Activated CD4-positive, alpha-beta T cell treated with anti-CD3 and anti-CD28 coated beads for 36 hours (primary cell): ENCODE measurements at regions of chr4 and their contacts with region 1.

Region 1: GRCh38 chr4:114386637-114387233 is 211.9 kb upstream of the UGT8 start:
- DNase-seq: no peak
- ATAC-seq: no peak
- H3K4me3 Mint-ChIP-seq: no peak overlapping the region
- H3K27ac Mint-ChIP-seq: no peak overlapping the region
- H3K4me1 Mint-ChIP-seq: no peaks in the 10 kb centered on the region
- H3K27me3 Mint-ChIP-seq: peaks cover 9% of the 10 kb centered on the region

Region 2: DNA sequence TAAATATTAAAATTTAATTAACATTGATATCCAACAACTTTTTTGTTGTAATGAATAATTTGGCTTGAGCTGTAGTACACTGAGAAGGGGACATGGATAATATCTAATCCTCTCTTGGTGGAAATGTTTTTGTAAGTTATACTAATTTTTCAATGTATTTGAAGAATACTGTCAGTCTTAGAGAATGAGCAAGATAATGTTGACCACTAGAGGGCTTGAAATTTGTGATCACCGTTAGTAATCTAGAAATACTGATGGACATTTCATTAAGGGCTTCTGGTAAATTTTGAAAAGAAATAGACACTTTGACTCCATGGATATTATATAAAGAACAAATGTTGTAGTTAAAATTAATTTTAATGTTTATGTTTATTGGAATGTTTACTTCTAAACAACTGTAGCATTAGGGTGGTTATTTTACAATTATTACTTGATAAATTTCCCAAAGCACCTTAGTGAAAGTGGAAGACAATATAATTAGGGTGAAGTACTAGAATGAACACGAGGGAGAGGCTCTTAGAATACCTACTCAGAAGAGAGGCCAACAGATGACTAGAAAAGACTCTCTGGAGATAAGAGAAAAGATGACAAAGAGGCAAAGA is 605.2 kb before region 1 on chr4:
- CTCF ChIA-PET with region 1: no interaction called
- POLR2A ChIA-PET with region 1: no interaction called
- intact Hi-C with region 1: loop called in 1 of 2 experiments (anchors 10 kb)
- DNase-seq: no peak
- ATAC-seq: no peak
- H3K4me3 Mint-ChIP-seq: no peak overlapping the region
- H3K27ac Mint-ChIP-seq: no peak overlapping the region
- H3K4me1 Mint-ChIP-seq: peaks cover 31% of the 10 kb centered on the region
- H3K27me3 Mint-ChIP-seq: no peaks in the 10 kb centered on the region

Region 3: DNA sequence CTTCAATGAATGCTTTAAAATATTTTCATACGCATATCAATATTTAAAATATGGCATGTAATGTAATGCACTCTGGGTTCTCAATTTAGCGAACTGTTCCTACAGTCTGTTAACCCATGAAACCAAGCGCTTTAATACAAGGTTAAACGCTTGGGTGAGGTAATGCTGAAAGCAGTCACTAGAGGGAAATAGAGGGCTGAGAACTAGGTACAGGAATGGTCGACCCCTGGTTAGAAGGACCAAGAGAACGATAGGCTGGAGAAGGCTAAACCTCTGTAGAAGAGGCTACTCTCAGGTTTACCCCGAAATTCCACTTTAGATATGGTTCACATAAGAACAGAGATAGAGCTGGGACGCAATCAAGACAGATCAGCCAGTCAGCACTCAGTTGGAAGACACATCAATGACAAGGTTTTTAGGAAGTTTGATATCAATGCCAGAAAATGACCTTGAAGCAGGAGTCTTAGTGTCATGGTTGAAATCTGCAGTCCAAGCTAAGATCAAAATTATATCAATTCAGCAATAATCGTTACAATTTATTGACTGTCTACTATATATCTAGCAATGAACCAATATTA is 434.2 kb before region 1 on chr4:
- CTCF ChIA-PET with region 1: no interaction called
- POLR2A ChIA-PET with region 1: no interaction called
- intact Hi-C with region 1: loop called (anchors 2 to 10 kb)
- DNase-seq: peak; percentile 30
- ATAC-seq: peak; percentile 83
- H3K4me3 Mint-ChIP-seq: no peak overlapping the region
- H3K27ac Mint-ChIP-seq: no peak overlapping the region
- H3K4me1 Mint-ChIP-seq: peaks cover 4% of the 10 kb centered on the region
- H3K27me3 Mint-ChIP-seq: peaks cover 8% of the 10 kb centered on the region

Region 4: DNA sequence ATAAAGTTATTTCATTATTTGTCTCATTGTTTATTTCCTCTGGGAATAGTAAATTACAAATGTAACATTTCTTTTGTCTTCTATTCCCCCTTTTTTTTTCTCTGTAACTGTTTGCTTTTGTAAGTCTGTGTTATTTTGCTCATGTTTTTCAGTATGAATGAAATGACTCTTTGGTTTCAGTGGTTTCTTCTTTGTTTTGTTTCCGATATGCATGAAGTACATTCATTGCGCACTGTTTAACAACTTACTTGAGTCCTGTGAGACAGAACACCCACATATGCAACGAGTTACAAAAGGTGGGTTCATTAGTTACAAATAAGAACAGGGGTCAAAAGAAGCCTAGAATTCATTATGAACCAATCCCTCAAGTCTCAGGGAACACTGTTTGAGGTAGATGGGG is 36.8 kb after region 1 on chr4:
- CTCF ChIA-PET with region 1: no interaction called
- POLR2A ChIA-PET with region 1: no interaction called
- intact Hi-C with region 1: no loop called
- DNase-seq: no peak
- ATAC-seq: peak; percentile 39
- H3K4me3 Mint-ChIP-seq: no peak overlapping the region
- H3K27ac Mint-ChIP-seq: no peak overlapping the region
- H3K4me1 Mint-ChIP-seq: no peaks in the 10 kb centered on the region
- H3K27me3 Mint-ChIP-seq: peaks cover 3% of the 10 kb centered on the region

Region 5: DNA sequence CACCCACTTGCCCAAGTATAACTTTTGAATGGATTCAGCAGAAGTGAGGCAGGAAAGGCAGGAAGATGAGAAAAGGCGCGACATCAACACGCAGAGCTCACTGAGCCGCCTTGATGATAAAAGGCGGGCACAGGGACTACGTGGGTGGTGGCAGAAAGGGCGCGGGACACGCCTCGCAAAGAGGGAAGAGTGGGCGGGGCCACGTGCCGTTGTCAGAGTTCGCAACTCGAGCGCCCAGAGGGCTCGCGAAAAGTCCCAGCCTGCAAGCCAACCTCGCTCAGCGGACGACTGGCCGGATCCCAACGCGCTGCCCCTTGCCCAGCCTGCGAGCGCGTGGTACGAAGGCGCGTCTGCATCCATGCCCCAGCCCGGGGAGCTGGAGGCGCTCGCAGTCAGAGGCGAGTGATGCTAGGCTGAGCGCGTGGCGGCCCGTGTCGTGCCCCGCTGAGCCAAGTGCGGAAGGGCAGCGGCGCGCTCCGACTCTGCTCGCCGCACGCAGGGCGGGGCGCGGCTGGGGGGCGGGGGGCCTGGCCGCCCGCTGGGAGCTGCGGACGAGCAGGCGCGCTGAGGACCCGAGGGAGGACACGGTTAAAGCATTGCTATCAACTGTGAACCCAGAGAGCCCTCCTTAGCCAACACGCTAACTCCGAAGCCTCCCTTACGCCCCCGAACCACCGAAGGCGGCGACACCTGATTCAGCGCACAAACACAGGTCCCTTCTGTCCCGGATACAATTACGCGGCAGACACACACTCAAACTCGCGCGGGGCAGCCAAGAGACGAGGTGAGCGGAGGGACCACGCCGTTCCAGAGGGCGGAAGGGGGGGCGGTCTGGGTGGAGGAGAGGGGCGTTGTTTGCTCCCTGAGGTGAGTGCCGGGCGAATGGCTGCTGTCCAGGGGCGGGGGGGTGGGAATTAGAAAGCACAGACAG is 211.7 kb after region 1 on chr4 and contains the start of gene UGT8:
- CTCF ChIA-PET with region 1: no interaction called
- POLR2A ChIA-PET with region 1: no interaction called
- intact Hi-C with region 1: no loop called
- DNase-seq: peak; percentile 73
- ATAC-seq: peak; percentile 79
- H3K4me3 Mint-ChIP-seq: peak within 1 kb of the TSS; percentile 50
- H3K27ac Mint-ChIP-seq: no peak within 1 kb of the TSS
- H3K4me1 Mint-ChIP-seq: peaks cover 14% of the 10 kb centered on the region
- H3K27me3 Mint-ChIP-seq: peaks cover 41% of the 10 kb centered on the region
- total RNA-seq, gene UGT8: 0.14 to 0.18 TPM

Region 6: DNA sequence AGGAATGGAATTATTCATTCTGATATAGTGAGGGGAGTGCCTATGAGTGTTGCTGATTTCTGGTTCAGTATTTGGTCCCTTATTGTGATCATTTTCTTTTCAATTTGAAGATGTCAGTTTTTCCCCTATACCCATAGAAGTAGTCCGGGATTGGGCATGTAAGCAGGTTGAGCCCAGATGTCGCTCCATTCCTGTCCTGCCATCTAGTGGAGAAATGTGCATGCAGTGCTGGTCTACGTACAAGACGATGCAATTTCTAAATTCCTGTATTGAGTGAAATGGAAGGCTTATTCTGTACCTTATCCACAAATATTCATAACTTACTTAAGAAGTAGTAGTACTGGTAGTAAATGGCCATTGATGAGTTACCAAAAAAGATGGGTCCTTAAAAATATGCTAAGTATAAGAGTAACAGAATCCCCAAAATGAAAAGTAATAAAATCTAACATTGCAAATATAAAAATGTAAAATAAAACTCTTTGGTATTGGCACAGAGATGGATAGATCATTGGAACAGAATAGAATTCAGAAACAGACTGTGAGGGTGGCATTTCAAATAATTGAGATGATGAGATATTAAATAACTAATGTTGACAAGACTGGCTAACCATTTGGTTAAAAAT is 272.8 kb after region 1 on chr4:
- CTCF ChIA-PET with region 1: interaction called, 3 read pairs
- POLR2A ChIA-PET with region 1: no interaction called
- intact Hi-C with region 1: loop called (anchors 1 kb)
- DNase-seq: peak; percentile 59
- ATAC-seq: peak; percentile 66
- H3K4me3 Mint-ChIP-seq: no peak overlapping the region
- H3K27ac Mint-ChIP-seq: no peak overlapping the region
- H3K4me1 Mint-ChIP-seq: no peaks in the 10 kb centered on the region
- H3K27me3 Mint-ChIP-seq: peaks cover 10% of the 10 kb centered on the region

Region 7: GRCh38 chr4:114807759-114808404 is 421.1 kb after region 1 on chr4:
- CTCF ChIA-PET with region 1: no interaction called
- POLR2A ChIA-PET with region 1: no interaction called
- intact Hi-C with region 1: loop called (anchors 2 to 5 kb)
- DNase-seq: peak; percentile 51
- ATAC-seq: peak; percentile 88
- H3K4me3 Mint-ChIP-seq: no peak overlapping the region
- H3K27ac Mint-ChIP-seq: no peak overlapping the region
- H3K4me1 Mint-ChIP-seq: no peaks in the 10 kb centered on the region
- H3K27me3 Mint-ChIP-seq: peaks cover 8% of the 10 kb centered on the region